Esophagus muscularis mucosa (tissue), 4 donors: ENCODE measurements at regions of chrX and their contacts with region 1.

Region 1: DNA sequence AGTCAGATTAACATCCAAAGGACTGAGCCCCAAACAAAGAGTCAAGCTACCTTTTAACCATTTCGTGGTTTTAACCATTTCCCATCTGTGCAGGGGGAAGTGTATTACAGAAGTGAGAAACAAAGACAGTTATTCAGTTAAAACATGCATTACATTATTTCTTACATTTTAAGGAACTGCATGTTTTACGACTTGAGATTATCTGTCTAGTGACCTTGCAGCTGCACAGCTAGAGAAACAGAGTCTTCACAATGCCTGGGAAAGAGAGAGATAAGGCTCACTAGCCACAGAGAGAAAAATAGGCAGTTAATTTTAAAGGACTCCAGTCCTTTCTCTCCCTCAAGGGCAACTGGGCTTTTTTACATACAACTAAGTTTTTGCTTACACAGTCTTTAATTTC is 48.7 kb upstream of the KLHL4 start:
- DNase-seq: no peak
- H3K4me3 ChIP-seq: no peak overlapping the region
- H3K27ac ChIP-seq: no peak overlapping the region
- H3K4me1 ChIP-seq: no peaks in the 10 kb centered on the region
- H3K27me3 ChIP-seq: no peaks in the 10 kb centered on the region
- CTCF ChIP-seq: no peak
- EP300 ChIP-seq: no peak
- POLR2A ChIP-seq: no peak

Region 2: GRCh38 chrX:87370865-87371264 is 98.1 kb before region 1 on chrX:
- intact Hi-C with region 1: no loop called
- DNase-seq: no peak
- H3K4me3 ChIP-seq: no peak overlapping the region
- H3K27ac ChIP-seq: no peak overlapping the region
- H3K4me1 ChIP-seq: no peaks in the 10 kb centered on the region
- H3K27me3 ChIP-seq: no peaks in the 10 kb centered on the region
- CTCF ChIP-seq: no peak
- EP300 ChIP-seq: no peak
- POLR2A ChIP-seq: no peak

Region 3: GRCh38 chrX:87517571-87518141 is 48.7 kb after region 1 on chrX and contains the start of gene KLHL4:
- intact Hi-C with region 1: loop called (anchors 2 kb)
- DNase-seq: no peak
- H3K4me3 ChIP-seq: peak within 1 kb of the TSS; percentile 43 to 52 (median 48)
- H3K27ac ChIP-seq: peak within 1 kb of the TSS; percentile 52 to 72 (median 62)
- H3K4me1 ChIP-seq: peaks cover 0 to 5% (median 0%) of the 10 kb centered on the region in 4 donors
- H3K27me3 ChIP-seq: no peaks in the 10 kb centered on the region
- CTCF ChIP-seq: no peak
- EP300 ChIP-seq: no peak
- POLR2A ChIP-seq: no peak
- total RNA-seq, gene KLHL4: 1.0 to 3.0 (median 2.1) TPM

Region 4: DNA sequence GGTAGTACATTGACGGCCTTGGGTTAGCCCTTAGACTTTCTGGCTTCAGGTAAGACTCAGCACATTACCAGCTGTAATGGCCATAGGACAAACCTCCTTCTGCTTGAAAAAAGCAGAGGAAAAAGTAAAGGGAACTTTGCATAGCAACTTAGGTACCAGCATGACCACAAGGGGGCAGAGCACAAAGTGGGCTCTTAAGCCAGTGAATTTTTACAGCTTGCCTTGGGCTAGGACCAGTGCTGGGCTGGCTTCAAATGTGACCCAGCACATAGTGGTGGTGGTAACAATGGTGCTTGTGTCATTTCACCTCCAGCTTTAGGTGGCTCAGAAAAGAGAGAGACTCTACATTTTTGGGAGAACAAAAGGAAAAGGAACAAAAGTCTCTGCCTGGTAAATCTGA is 114.7 kb after region 1 on chrX:
- intact Hi-C with region 1: no loop called
- DNase-seq: no peak
- H3K4me3 ChIP-seq: no peak overlapping the region
- H3K27ac ChIP-seq: no peak overlapping the region
- H3K4me1 ChIP-seq: no peaks in the 10 kb centered on the region
- H3K27me3 ChIP-seq: no peaks in the 10 kb centered on the region
- CTCF ChIP-seq: no peak
- EP300 ChIP-seq: no peak
- POLR2A ChIP-seq: no peak